Vagina (tissue), 2 donors: ENCODE measurements at regions of chr3 and their contacts with region 1.

Region 1: DNA sequence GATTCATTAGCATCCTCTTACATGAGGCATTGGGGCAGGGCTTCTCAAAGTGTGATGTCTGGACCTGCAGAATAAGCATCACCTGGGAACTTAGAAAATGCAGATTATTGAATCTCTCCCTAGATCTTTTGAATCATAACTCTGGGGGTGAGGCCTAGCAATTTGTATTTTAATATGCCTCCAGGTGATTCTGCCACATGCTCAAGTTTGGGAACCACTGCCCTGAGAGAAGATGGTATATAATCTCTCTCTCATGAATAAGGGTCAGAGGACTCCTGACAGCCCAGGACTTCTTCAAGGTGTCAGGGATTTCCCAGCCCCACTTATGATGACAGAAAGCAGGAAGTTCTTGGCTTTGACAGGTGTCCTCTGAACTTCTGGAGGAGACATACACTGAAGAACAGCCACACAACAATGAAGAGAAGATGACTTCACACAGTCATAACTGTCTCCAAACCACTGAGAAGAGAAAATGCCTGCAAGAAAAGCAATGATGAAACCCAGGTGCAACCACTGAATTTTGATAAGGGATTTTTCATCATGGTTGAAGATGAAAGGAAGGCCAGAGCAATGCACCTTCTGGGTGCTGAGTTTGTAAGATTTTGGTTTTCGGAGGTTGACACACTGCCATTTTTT is 211.9 kb upstream of the MRPL3 start:
- DNase-seq: no peak
- H3K4me3 ChIP-seq: no peak overlapping the region
- H3K27ac ChIP-seq: no peak overlapping the region
- H3K4me1 ChIP-seq: no peaks in the 10 kb centered on the region
- H3K27me3 ChIP-seq: no peaks in the 10 kb centered on the region
- CTCF ChIP-seq: no peak
- POLR2A ChIP-seq: no peak

Region 2: GRCh38 chr3:131772269-131773026 is 57.7 kb after region 1 on chr3:
- intact Hi-C with region 1: no loop called
- DNase-seq: no peak
- H3K4me3 ChIP-seq: no peak overlapping the region
- H3K27ac ChIP-seq: no peak overlapping the region
- H3K4me1 ChIP-seq: no peaks in the 10 kb centered on the region
- H3K27me3 ChIP-seq: no peaks in the 10 kb centered on the region
- CTCF ChIP-seq: no peak
- POLR2A ChIP-seq: no peak

Region 3: GRCh38 chr3:132817646-132818177 is 1103.0 kb after region 1 on chr3:
- intact Hi-C with region 1: loop called (anchors 5 kb)
- DNase-seq: no peak
- H3K4me3 ChIP-seq: no peak overlapping the region
- H3K27ac ChIP-seq: no peak overlapping the region
- H3K4me1 ChIP-seq: no peaks in the 10 kb centered on the region
- H3K27me3 ChIP-seq: no peaks in the 10 kb centered on the region
- CTCF ChIP-seq: no peak
- POLR2A ChIP-seq: no peak